CD8-positive, alpha-beta memory T cell (primary cell): ENCODE measurements at regions of chr12 and their contacts with region 1.

Region 1: DNA sequence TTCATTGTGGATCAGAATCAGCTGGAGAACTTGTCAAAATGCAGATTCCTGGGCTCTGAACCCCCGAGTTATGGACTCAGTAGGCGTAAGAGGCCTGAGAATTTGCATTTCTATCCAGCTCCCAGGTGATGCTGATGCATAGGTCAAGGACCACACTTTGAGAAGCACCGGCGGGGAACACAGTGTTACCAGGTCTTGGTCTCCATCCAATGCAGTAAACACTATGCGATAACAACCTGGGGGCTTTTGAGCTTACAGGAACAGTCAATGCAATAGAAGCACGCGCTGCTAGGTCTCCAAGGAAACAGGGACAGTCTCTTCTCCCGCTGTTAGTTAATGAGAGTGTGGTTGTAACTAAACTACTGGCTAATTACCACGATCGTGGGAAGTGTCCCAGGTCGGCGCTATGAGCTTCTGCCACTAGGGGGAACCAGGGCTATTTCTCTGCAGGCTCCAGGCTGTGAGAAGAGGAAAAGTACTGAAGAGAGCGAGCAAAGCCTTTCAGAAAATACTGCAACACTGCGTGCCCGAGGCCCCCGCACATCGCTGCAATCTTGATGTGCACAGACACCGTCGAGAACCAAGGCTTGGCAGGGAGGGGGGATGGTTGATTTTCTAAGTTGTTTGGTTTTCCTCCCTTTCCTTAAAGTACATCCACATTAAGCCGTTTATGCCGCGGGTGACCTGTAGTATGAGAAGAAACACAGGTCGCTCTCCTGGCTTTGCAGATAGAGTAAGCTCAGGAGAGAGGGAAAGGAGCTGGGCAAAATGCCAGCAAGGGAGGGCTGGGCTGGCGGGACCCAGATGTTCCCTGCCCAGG is 52.0 kb upstream of the KCNA1 start:
- DNase-seq: peak; percentile 42 to 70 (median 51)
- H3K4me3 ChIP-seq: peak overlapping the region; percentile 62
- H3K4me3 Mint-ChIP-seq: peak overlapping the region in 6 of 7 donors; percentile 68 to 85 (median 78)
- H3K27ac ChIP-seq: no peak overlapping the region
- H3K27ac Mint-ChIP-seq: peak overlapping the region in 1 of 8 donors; percentile 25
- H3K4me1 ChIP-seq: peaks cover 8% of the 10 kb centered on the region
- H3K4me1 Mint-ChIP-seq: peaks cover 18 to 24% (median 23%) of the 10 kb centered on the region in 3 donors
- H3K27me3 ChIP-seq: no peaks in the 10 kb centered on the region
- H3K27me3 Mint-ChIP-seq: peaks cover 15 to 33% of the 10 kb centered on the region in 2 donors

Region 2: DNA sequence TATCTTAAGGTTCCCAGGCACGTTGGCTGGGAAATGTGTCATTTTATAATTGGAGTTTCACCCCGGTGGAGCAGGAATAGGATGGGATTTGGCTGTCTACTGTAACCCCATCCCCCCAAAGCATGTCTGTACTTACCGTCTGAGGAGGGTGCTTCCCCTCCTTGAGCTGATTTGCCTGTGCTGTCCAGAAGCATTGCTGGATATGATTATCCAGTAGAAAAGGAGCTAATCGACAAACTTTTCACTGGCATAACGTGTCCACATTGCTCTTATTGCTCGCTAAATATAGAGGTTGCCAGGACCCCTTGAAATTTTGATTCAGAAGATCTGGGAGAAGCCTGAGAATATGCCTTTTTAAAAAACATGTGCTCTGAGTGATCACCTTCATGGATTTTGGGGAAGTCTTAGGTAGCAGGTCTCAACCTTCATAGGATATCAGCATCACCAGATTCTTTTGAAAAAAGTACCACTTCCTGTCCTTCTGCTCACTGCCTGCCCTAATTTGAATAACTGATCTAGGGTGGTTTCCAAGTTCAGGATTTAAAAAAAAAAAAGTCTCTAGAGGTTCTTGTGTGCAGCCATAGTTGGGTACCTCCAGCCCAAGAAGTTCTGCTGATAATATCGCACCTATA is 28.4 kb before region 1 on chr12:
- CTCF ChIA-PET with region 1: interaction called, 21 read pairs
- POLR2A ChIA-PET with region 1: no interaction called
- DNase-seq: peak in 2 of 5 donors; percentile 32 to 45
- H3K4me3 ChIP-seq: peak overlapping the region; percentile 31
- H3K4me3 Mint-ChIP-seq: peak overlapping the region; percentile 41 to 80 (median 72)
- H3K27ac ChIP-seq: no peak overlapping the region
- H3K27ac Mint-ChIP-seq: peak overlapping the region; percentile 65 to 96 (median 88)
- H3K4me1 ChIP-seq: peaks cover 64% of the 10 kb centered on the region
- H3K4me1 Mint-ChIP-seq: peaks cover 60 to 70% (median 65%) of the 10 kb centered on the region in 3 donors
- H3K27me3 ChIP-seq: no peaks in the 10 kb centered on the region
- H3K27me3 Mint-ChIP-seq: peaks cover 0 to 3% of the 10 kb centered on the region in 2 donors

Region 3: GRCh38 chr12:4843907-4844306 is 13.8 kb before region 1 on chr12:
- CTCF ChIA-PET with region 1: interaction called, 16 read pairs
- POLR2A ChIA-PET with region 1: no interaction called
- DNase-seq: no peak
- H3K4me3 ChIP-seq: no peak overlapping the region
- H3K4me3 Mint-ChIP-seq: no peak overlapping the region
- H3K27ac ChIP-seq: no peak overlapping the region
- H3K27ac Mint-ChIP-seq: no peak overlapping the region
- H3K4me1 ChIP-seq: no peaks in the 10 kb centered on the region
- H3K4me1 Mint-ChIP-seq: peaks cover 0 to under 1% (median 0%) of the 10 kb centered on the region in 3 donors
- H3K27me3 ChIP-seq: no peaks in the 10 kb centered on the region
- H3K27me3 Mint-ChIP-seq: peaks cover 6 to 27% of the 10 kb centered on the region in 2 donors